ENCODE measurements at regions of chr3 and their contacts with region 1.

Region 1: GRCh38 chr3:107421170-107421792 is 44.0 kb downstream of the CCDC54 start:
- DNase-seq: peak in 1 of 2 experiments; percentile 66
- ATAC-seq: peak; percentile 81 to 91
- H3K4me3 ChIP-seq: peak overlapping the region; percentile 27; the same call in 1 of the 3 replicates
- H3K27ac ChIP-seq: 0 out of 6 replicates have a peak overlapping the region, but pooled peaks of 1 of the 2 experiments have one; percentile 61
- H3K4me1 ChIP-seq: no peaks in the 10 kb centered on the region
- CTCF ChIP-seq: peak; percentile 80
- EP300 ChIP-seq: no peak
- POLR2A ChIP-seq: no peak
- RAD21 ChIP-seq: peak; percentile 66 to 67

Region 2: GRCh38 chr3:106930086-106930485 is 491.2 kb before region 1 on chr3:
- CTCF ChIA-PET with region 1: no interaction called
- POLR2A ChIA-PET with region 1: no interaction called
- DNase-seq: no peak
- ATAC-seq: no peak
- H3K4me3 ChIP-seq: no peak overlapping the region
- H3K27ac ChIP-seq: no peak overlapping the region
- H3K4me1 ChIP-seq: no peaks in the 10 kb centered on the region
- CTCF ChIP-seq: no peak
- EP300 ChIP-seq: no peak
- POLR2A ChIP-seq: no peak
- RAD21 ChIP-seq: no peak

Region 3: DNA sequence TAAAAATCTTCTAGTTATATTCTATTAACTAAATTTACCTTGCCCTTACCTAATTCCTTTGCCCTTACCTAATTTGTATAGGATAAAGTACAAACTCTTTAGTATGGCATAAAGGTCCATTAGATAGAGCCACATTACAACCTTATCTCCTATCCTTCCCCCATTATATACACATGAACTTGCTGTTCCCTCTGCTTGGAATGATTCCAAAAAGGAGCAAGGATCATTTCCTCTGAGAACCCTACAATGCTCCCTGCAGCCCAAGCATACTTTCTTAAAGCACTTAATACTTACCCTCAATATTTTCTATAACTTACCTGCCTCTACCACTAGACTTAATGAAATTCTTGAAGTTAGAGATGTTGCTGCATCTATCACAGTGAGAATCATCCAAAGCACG is 163.0 kb before region 1 on chr3:
- CTCF ChIA-PET with region 1: interaction called, 11 read pairs
- POLR2A ChIA-PET with region 1: interaction called, 3 read pairs
- DNase-seq: no peak
- ATAC-seq: no peak
- H3K4me3 ChIP-seq: no peak overlapping the region
- H3K27ac ChIP-seq: no peak overlapping the region
- H3K4me1 ChIP-seq: no peaks in the 10 kb centered on the region
- CTCF ChIP-seq: no peak
- EP300 ChIP-seq: no peak
- POLR2A ChIP-seq: no peak
- RAD21 ChIP-seq: no peak

Region 4: GRCh38 chr3:107407355-107407754 is 13.9 kb before region 1 on chr3:
- CTCF ChIA-PET with region 1: interaction called, 18 read pairs
- POLR2A ChIA-PET with region 1: interaction called, 3 read pairs
- DNase-seq: no peak
- ATAC-seq: no peak
- H3K4me3 ChIP-seq: no peak overlapping the region
- H3K27ac ChIP-seq: no peak overlapping the region
- H3K4me1 ChIP-seq: no peaks in the 10 kb centered on the region
- CTCF ChIP-seq: no peak
- EP300 ChIP-seq: no peak
- POLR2A ChIP-seq: no peak
- RAD21 ChIP-seq: no peak

Measured in A549 (cell line).